Activated T-helper 2 cell treated with anti-CD3 and anti-CD28 coated beads, Interferon-gamma antibody, Interleukin-2, Interleukin-4, amounts not matched to agents 10 μg/mL and 5 μg/mL and 100 μg/mL, durations not matched to agents 14 hours and 24 hours and 36 hours (primary cell): ENCODE measurements at regions of chr11 and their contacts with region 1.

Region 1: DNA sequence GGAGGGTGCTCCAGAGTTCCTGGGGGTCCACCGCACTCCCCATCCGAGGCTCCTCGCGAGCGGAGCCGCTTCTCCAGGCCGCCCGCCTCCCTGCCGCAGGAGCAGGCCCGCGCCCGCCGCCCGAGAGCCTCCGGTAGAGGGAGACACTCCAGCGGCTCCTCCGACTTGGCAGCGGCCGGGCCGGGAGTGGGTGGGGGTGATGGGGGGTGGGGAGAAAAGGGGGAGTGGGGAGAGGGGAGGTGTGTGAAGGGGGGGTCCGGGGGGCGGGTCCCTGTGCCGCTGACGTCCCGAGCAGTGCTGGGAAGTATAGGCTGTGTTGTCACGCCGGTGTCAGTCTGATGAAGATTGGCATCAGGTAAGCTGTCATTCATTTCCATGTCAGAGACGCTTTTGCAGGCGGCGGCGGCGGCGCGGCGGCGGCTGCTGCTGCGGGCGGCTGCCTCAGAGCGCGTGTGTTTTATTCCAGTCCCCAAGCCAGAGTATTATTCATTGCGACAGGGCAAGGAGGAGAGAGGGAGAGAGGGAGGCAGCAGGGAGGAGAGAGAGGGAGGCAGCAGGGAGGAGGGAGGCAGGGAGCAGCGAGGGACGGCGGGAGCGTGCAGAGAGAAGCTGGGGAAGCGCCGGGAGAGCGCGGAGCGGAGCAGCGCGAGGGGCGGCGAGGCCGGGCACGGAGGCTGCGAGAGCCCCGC is at the start of gene PKNOX2:
- DNase-seq: peak; percentile 42
- H3K4me3 Mint-ChIP-seq: peak within 1 kb of the TSS; percentile 94
- H3K27ac Mint-ChIP-seq: no peak within 1 kb of the TSS
- H3K4me1 Mint-ChIP-seq: peaks cover 11% of the 10 kb centered on the region
- H3K27me3 Mint-ChIP-seq: peaks cover 78% of the 10 kb centered on the region
- total RNA-seq, gene PKNOX2: not detected in 2 replicates

Region 2: GRCh38 chr11:124865921-124866583 is 298.5 kb before region 1 on chr11:
- intact Hi-C with region 1: loop called (anchors 2 kb)
- DNase-seq: peak; percentile 41
- H3K4me3 Mint-ChIP-seq: no peak overlapping the region
- H3K27ac Mint-ChIP-seq: no peak overlapping the region
- H3K4me1 Mint-ChIP-seq: peaks cover 9% of the 10 kb centered on the region
- H3K27me3 Mint-ChIP-seq: peaks cover 93% of the 10 kb centered on the region

Region 3: DNA sequence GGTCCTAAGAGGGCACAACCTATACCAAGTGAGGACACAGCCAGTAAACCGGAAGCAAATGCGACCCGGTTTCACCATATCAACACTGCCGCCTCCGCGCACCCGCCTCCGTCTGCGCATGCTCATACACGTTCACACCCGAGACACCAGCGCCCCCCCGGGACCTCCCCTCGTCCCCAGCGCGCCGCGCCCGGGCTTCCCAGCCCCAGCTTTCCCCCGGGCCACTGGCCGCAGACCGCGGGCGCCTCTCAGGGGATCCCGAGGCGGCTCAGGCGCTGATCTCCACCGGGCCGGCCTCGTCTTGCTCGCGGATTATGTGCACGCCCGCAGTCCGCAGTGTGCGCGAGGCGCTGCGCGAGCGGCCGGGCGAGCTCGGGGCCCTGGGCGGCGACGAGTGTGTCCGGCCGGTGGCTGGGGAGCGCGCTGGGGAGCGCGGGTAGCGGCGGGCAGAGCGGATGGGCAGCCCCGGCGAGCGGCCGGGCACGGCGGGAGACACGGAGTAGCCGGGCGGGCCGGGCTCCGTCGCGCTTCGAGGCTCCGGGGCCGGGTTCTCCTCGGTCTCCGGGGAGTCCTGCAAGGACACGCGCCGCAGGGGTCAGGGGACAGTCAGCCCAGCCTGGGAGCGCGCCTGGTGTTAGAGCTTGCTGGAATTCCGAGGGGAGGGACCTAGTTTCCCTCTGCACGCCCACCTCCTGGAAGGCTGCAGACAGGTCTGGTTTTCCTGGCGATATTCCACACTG is 243.5 kb before region 1 on chr11:
- intact Hi-C with region 1: no loop called
- DNase-seq: peak; percentile 63
- H3K4me3 Mint-ChIP-seq: peak overlapping the region; percentile 47
- H3K27ac Mint-ChIP-seq: no peak overlapping the region
- H3K4me1 Mint-ChIP-seq: peaks cover 10% of the 10 kb centered on the region
- H3K27me3 Mint-ChIP-seq: peaks cover 5% of the 10 kb centered on the region

Region 4: DNA sequence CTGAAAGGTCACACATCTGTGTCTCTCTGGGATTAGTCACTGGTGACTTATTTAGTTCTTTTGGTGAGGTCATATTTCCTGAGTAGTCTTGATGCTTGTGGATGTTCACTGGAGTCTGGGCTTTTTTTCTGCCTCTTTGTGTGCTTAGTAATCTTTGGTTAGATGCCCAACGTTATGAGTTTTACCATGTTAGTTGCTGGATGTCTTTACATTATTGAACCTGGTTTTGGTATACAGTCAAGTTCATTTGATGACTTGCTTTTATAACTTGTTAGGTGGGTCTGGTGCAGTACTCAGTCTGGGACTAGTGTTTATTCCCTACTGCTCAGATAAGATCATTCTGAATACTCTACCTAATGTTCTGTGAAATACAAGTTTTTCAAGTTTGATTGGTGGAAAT is 127.6 kb before region 1 on chr11:
- intact Hi-C with region 1: no loop called
- DNase-seq: no peak
- H3K4me3 Mint-ChIP-seq: no peak overlapping the region
- H3K27ac Mint-ChIP-seq: no peak overlapping the region
- H3K4me1 Mint-ChIP-seq: peaks cover 12% of the 10 kb centered on the region
- H3K27me3 Mint-ChIP-seq: no peaks in the 10 kb centered on the region

Region 5: DNA sequence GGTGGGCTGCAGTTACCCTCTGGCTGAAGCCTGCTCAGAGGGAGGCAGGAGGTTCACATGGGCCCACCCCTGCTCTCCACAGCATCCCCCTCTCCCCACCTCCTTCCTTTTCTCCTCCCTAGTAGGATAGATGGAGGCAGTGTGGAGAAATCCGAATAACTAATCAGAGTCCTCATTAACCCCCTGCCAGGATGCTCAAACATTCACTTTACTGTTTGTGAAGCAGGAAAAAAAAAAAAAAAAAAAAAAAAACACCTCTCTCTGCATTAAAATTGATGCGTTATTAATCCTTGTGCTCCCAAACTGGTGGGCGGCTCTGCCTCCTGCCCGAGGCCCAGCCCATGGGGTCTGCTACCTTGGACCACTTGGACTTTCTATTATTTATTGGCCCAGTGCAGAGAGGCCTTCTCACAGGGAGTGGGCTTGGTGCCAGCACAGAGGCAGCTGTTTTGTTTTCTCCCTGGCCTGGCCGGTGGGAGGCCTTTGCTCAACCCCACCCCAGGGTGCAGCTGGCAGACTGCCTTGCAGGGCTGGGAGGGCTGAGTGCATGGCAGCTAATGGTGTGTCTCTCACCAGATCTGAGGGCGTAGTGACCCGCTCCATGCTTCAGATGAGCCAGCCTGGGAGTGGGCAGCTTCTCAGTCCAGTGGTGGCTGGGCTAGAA is 150.6 kb after region 1 on chr11:
- intact Hi-C with region 1: no loop called
- DNase-seq: no peak
- H3K4me3 Mint-ChIP-seq: no peak overlapping the region
- H3K27ac Mint-ChIP-seq: no peak overlapping the region
- H3K4me1 Mint-ChIP-seq: no peaks in the 10 kb centered on the region
- H3K27me3 Mint-ChIP-seq: no peaks in the 10 kb centered on the region

Region 6: DNA sequence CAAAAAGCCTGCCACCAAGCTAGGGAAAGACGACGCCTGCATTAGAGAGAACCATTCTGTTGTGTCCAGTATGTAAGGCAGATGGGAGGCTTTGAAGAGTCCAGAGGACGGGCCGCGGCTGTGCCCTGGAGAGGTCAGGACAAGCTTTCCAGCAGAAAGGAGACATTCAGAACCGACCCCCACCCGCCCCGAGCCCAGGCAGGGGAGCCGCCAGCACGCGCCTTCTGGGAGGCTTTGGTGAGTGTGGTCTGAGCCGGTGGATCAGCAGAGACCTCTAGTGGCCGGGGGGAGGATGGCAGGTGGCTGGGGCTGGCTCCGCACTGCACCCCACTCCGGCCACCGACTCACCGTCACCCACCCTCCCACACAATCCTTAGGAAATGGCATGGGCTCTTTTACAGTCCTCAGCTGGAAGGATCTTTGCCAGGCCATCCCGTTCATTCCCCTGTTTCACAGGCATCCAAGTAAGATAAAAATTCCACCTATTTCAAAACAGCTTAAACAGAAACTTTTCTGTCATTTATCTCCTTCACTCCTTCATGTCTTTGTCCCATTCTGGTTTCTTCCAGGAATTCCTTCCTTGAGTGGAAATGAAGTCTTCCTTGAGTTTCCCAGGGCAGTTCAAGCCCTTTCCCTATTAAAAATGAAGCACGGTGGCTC is 240.3 kb after region 1 on chr11:
- intact Hi-C with region 1: loop called (anchors 2 kb)
- DNase-seq: peak; percentile 54
- H3K4me3 Mint-ChIP-seq: no peak overlapping the region
- H3K27ac Mint-ChIP-seq: no peak overlapping the region
- H3K4me1 Mint-ChIP-seq: peaks cover 2% of the 10 kb centered on the region
- H3K27me3 Mint-ChIP-seq: peaks cover 32% of the 10 kb centered on the region